CD4-positive, alpha-beta memory T cell (primary cell): ENCODE measurements at regions of chr12 and their contacts with region 1.

Region 1: GRCh38 chr12:92145731-92146496 is at the start of gene BTG1:
- DNase-seq: peak; percentile 99 to 100 (median 100)
- H3K4me3 ChIP-seq: peak within 1 kb of the TSS; percentile 89 to 96
- H3K4me3 Mint-ChIP-seq: peak within 1 kb of the TSS; percentile 92 to 100 (median 100)
- H3K27ac ChIP-seq: peak within 1 kb of the TSS; percentile 86
- H3K27ac Mint-ChIP-seq: peak within 1 kb of the TSS; percentile 95 to 100 (median 100)
- H3K4me1 ChIP-seq: peaks cover 23% of the 10 kb centered on the region
- H3K4me1 Mint-ChIP-seq: peaks cover 9 to 37% (median 21%) of the 10 kb centered on the region in 4 donors
- H3K27me3 ChIP-seq: no peaks in the 10 kb centered on the region
- H3K27me3 Mint-ChIP-seq: no peaks in the 10 kb centered on the region
- total RNA-seq, gene BTG1: 431 to 469 TPM

Region 2: GRCh38 chr12:91382081-91382543 is 763.8 kb before region 1 on chr12:
- CTCF ChIA-PET with region 1: interaction called, 9 read pairs
- POLR2A ChIA-PET with region 1: interaction called, 25 read pairs
- intact Hi-C with region 1: loop called (anchors 1 kb)
- DNase-seq: peak; percentile 72 to 79 (median 78)
- H3K4me3 ChIP-seq: no peak overlapping the region
- H3K4me3 Mint-ChIP-seq: peak overlapping the region; percentile 46 to 79 (median 63)
- H3K27ac ChIP-seq: no peak overlapping the region
- H3K27ac Mint-ChIP-seq: peak overlapping the region in 2 of 7 donors; percentile 23 to 31
- H3K4me1 ChIP-seq: peaks cover 7% of the 10 kb centered on the region
- H3K4me1 Mint-ChIP-seq: peaks cover 2 to 5% (median 5%) of the 10 kb centered on the region in 4 donors
- H3K27me3 ChIP-seq: no peaks in the 10 kb centered on the region
- H3K27me3 Mint-ChIP-seq: peaks cover 3 to 6% of the 10 kb centered on the region in 2 donors

Region 3: DNA sequence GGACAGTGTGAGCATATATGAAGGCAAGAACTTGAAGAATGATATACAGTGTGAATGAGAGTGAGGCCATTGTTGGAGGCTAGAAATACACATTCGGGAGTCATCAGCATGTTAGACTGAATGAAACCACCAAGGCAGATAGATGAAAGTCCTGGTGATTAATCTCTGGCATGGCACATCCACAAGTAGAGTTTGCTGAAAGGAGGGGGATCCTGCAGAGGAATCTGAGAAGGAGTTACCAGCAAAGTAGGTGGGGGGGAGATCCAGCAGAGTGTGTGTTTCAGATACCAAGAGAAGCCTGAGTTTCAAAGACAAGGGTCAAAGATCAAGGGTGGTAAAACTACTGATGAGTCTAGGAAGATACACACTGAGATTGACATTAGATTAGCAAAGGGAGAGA is 536.6 kb before region 1 on chr12:
- CTCF ChIA-PET with region 1: no interaction called
- POLR2A ChIA-PET with region 1: no interaction called
- intact Hi-C with region 1: no loop called
- DNase-seq: no peak
- H3K4me3 ChIP-seq: no peak overlapping the region
- H3K4me3 Mint-ChIP-seq: no peak overlapping the region
- H3K27ac ChIP-seq: no peak overlapping the region
- H3K27ac Mint-ChIP-seq: peak overlapping the region in 2 of 7 donors; percentile 5 to 19
- H3K4me1 ChIP-seq: no peaks in the 10 kb centered on the region
- H3K4me1 Mint-ChIP-seq: peaks cover 0 to 4% (median under 1%) of the 10 kb centered on the region in 4 donors
- H3K27me3 ChIP-seq: no peaks in the 10 kb centered on the region
- H3K27me3 Mint-ChIP-seq: peaks cover 0 to 3% of the 10 kb centered on the region in 2 donors

Region 4: GRCh38 chr12:91985002-91985787 is 160.7 kb before region 1 on chr12:
- CTCF ChIA-PET with region 1: interaction called, 52 read pairs
- POLR2A ChIA-PET with region 1: interaction called, 183 read pairs
- intact Hi-C with region 1: no loop called
- DNase-seq: no peak
- H3K4me3 ChIP-seq: no peak overlapping the region
- H3K4me3 Mint-ChIP-seq: no peak overlapping the region
- H3K27ac ChIP-seq: no peak overlapping the region
- H3K27ac Mint-ChIP-seq: peak overlapping the region in 2 of 7 donors; percentile 34 to 47
- H3K4me1 ChIP-seq: peaks cover 17% of the 10 kb centered on the region
- H3K4me1 Mint-ChIP-seq: peaks cover 17 to 36% (median 24%) of the 10 kb centered on the region in 4 donors
- H3K27me3 ChIP-seq: no peaks in the 10 kb centered on the region
- H3K27me3 Mint-ChIP-seq: no peaks in the 10 kb centered on the region

Region 5: DNA sequence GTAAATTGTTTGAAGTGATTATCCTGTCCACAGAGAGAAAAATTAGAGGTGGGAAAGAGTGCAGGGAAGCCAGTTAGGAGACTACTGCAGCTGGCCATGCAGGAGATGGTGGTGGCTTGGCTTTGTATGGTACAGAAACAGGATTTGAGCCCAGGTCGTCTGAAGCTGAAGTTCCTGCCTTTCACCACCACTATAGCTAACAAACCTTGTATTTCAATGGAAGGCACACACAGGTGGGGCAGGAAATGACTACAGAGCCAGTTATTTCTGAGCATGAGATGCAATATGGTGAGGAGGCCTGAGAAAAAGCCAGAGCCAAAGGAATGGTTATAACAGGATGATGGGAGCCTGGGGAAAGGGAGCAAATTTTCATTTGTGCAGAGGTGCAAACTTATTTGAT is 104.2 kb before region 1 on chr12:
- CTCF ChIA-PET with region 1: interaction called, 25 read pairs
- POLR2A ChIA-PET with region 1: interaction called, 525 read pairs
- intact Hi-C with region 1: no loop called
- DNase-seq: peak; percentile 42 to 58 (median 48)
- H3K4me3 ChIP-seq: no peak overlapping the region
- H3K4me3 Mint-ChIP-seq: peak overlapping the region in 7 of 8 donors; percentile 14 to 84 (median 64)
- H3K27ac ChIP-seq: no peak overlapping the region
- H3K27ac Mint-ChIP-seq: peak overlapping the region; percentile 54 to 90 (median 82)
- H3K4me1 ChIP-seq: peaks cover 69% of the 10 kb centered on the region
- H3K4me1 Mint-ChIP-seq: peaks cover 46 to 87% (median 63%) of the 10 kb centered on the region in 4 donors
- H3K27me3 ChIP-seq: no peaks in the 10 kb centered on the region
- H3K27me3 Mint-ChIP-seq: no peaks in the 10 kb centered on the region

Region 6: DNA sequence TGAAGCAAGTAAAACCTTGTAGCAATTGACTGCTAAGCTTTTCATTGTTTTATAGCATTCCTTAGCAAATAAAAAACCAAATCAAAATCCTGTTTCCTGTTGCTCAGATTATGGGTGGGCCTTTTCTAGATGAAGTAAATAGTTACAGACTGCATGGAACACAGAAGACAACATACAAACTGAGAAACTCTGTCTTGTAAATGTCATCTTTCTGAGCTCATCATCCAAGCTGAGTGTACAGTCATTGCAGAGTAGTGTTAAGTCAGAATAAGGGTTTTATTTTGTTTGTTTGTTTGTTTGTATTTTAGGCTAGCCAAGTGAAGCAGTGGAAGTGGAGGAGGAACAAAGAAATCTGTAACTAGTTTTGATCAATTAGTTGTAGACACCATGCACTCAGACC is 24.1 kb after region 1 on chr12:
- CTCF ChIA-PET with region 1: interaction called, 3 read pairs
- POLR2A ChIA-PET with region 1: interaction called, 28 read pairs
- intact Hi-C with region 1: no loop called
- DNase-seq: no peak
- H3K4me3 ChIP-seq: no peak overlapping the region
- H3K4me3 Mint-ChIP-seq: no peak overlapping the region
- H3K27ac ChIP-seq: no peak overlapping the region
- H3K27ac Mint-ChIP-seq: peak overlapping the region in 1 of 7 donors; percentile 13
- H3K4me1 ChIP-seq: peaks cover 12% of the 10 kb centered on the region
- H3K4me1 Mint-ChIP-seq: peaks cover 4 to 18% (median 12%) of the 10 kb centered on the region in 4 donors
- H3K27me3 ChIP-seq: no peaks in the 10 kb centered on the region
- H3K27me3 Mint-ChIP-seq: no peaks in the 10 kb centered on the region

Region 7: DNA sequence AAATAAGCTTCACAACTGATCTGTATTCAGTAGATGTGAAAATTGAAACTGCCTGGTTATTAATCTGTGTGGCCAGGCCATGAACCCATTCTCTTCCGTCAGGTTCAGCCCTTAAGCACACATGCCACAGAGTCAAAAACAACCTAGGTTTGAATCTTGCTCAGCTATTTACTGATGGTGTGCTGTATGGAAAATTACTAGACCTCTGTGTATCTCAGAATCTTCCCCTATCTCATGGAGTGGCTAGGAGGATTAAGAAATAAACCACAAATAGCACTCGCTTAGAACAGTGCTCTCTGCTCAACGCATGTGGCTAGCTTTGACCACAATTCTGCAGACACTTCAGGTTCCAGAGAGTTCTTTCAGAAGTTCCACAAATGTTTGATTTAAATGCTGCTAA is 316.1 kb after region 1 on chr12:
- CTCF ChIA-PET with region 1: no interaction called
- POLR2A ChIA-PET with region 1: interaction called, 37 read pairs
- intact Hi-C with region 1: no loop called
- DNase-seq: peak in 3 of 5 donors; percentile 10 to 28 (median 15)
- H3K4me3 ChIP-seq: no peak overlapping the region
- H3K4me3 Mint-ChIP-seq: peak overlapping the region in 6 of 8 donors; percentile 15 to 59 (median 46)
- H3K27ac ChIP-seq: peak overlapping the region; percentile 36
- H3K27ac Mint-ChIP-seq: peak overlapping the region; percentile 48 to 80 (median 76)
- H3K4me1 ChIP-seq: peaks cover 45% of the 10 kb centered on the region
- H3K4me1 Mint-ChIP-seq: peaks cover 22 to 46% (median 27%) of the 10 kb centered on the region in 4 donors
- H3K27me3 ChIP-seq: no peaks in the 10 kb centered on the region
- H3K27me3 Mint-ChIP-seq: no peaks in the 10 kb centered on the region

Region 8: DNA sequence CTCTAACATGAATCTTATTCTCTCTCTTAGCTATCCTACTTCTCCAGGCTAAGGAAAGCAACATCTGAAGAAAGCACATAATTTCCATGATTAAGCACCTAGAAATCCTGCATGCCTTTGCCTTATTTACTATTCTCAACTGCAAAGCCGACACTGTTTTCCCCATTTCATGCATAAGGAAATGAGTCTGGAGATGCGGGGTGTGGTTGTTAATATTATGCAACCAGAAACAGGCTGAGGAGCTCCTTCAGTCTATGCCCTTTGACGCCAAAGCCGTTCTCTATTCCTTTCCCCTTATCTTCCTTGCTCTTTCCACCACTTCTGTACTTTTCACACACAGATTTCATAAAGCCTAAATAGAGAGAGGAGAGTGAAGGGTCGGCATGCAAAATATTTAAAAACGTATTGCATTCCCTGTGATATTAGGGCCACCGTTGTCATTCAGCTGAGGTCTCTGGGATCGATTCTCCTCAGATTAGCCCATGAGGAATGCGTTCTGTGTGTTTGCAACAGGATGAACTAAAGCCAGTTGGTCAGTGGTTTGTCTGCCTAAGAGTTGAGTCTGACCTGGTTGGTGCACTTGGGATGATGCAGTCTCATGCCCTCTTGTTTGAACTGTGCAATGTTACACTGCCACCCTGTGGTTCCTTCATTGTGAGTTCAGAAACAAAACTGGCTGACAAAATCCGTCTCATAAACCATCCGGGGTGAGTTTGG is 503.8 kb after region 1 on chr12:
- CTCF ChIA-PET with region 1: interaction called, 8 read pairs
- POLR2A ChIA-PET with region 1: interaction called, 15 read pairs
- intact Hi-C with region 1: loop called (anchors 1 kb)
- DNase-seq: peak; percentile 55 to 68 (median 59)
- H3K4me3 ChIP-seq: no peak overlapping the region
- H3K4me3 Mint-ChIP-seq: no peak overlapping the region
- H3K27ac ChIP-seq: no peak overlapping the region
- H3K27ac Mint-ChIP-seq: peak overlapping the region in 5 of 7 donors; percentile 31 to 74 (median 46)
- H3K4me1 ChIP-seq: no peaks in the 10 kb centered on the region
- H3K4me1 Mint-ChIP-seq: peaks cover 0 to 6% (median 4%) of the 10 kb centered on the region in 4 donors
- H3K27me3 ChIP-seq: no peaks in the 10 kb centered on the region
- H3K27me3 Mint-ChIP-seq: peaks cover 0 to 2% of the 10 kb centered on the region in 2 donors

Region 9: DNA sequence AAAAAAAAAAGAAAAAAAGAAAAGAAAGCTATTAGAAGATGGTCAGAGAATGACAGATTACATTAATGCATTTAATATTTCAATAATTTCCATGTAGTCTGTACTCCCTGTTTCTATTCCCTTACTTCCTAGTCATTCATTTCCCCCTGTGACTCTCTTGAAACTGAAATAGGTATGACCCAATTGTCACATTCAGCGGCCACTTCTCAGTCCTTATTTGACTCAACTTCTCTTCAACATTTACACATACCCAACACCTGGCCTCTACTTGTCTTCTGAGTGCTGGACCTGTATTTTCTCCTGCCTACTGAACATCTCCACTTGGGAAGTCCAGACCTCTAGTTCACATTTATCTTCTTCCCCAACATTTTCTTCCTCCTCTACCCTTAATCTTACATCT is 776.0 kb after region 1 on chr12:
- CTCF ChIA-PET with region 1: no interaction called
- POLR2A ChIA-PET with region 1: no interaction called
- intact Hi-C with region 1: no loop called
- DNase-seq: no peak
- H3K4me3 ChIP-seq: no peak overlapping the region
- H3K4me3 Mint-ChIP-seq: no peak overlapping the region
- H3K27ac ChIP-seq: no peak overlapping the region
- H3K27ac Mint-ChIP-seq: peak overlapping the region in 1 of 7 donors; percentile 0
- H3K4me1 ChIP-seq: peaks cover 8% of the 10 kb centered on the region
- H3K4me1 Mint-ChIP-seq: peaks cover 17 to 26% (median 21%) of the 10 kb centered on the region in 4 donors
- H3K27me3 ChIP-seq: no peaks in the 10 kb centered on the region
- H3K27me3 Mint-ChIP-seq: no peaks in the 10 kb centered on the region